Dendritic cell treated with granulocyte-macrophage colony-stimulating factor and Interleukin-4, amounts not matched to agents 40 ng/mL and 50 ng/mL, for 4 days (primary cell): ENCODE measurements at regions of chr12 and their contacts with region 1.

Region 1: GRCh38 chr12:121296618-121297434 is at the start of gene CAMKK2:
- H3K4me3 Mint-ChIP-seq: peak within 1 kb of the TSS; percentile 89
- H3K27ac Mint-ChIP-seq: peak within 1 kb of the TSS; percentile 83
- H3K4me1 Mint-ChIP-seq: peaks cover 48% of the 10 kb centered on the region
- H3K27me3 Mint-ChIP-seq: no peaks in the 10 kb centered on the region

Region 2: DNA sequence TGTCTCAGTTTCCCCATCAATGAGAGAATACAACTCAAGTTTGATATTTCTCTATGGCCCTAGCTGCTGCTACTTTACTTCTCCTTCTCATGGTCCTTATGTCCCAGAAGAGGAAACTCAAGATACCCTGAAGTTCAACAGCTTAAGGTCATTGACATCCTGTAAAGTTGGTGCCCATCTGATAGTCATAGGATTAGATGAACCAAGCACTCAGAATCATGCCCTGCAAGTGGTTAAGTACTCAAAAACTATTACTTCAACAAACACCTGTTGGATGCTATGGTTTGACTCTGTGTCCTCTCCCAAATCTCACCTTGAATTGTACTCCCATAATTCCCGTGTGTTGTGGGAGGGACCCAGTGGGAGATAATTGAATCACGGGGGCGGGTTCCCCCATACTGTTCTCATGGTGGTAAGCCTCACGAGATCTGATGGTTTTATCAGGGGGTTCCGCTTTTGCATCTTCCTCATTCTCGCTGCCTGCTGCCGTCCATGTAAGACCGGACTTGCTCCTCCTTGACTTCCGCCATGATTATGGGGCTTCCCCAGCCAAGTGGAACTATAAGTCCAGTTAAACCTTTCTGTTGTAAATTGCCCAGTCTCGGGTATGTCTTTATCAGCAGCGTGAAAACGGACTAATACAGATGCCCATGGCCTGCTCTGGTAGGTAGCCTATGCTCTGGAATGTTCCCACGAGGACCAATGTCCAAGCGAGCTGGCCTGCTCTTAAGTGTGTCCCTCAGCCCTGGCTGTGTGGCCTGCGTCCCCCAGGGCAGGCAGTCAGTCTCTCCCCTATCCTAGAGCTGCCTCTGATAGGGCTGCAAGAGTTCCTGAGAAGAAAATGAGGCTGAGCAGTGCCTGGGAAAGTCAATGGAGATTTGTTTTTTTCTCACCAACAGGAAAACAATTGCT is 18.4 kb before region 1 on chr12:
- intact Hi-C with region 1: loop called (anchors 1 kb)
- H3K4me3 Mint-ChIP-seq: peak overlapping the region; percentile 9
- H3K27ac Mint-ChIP-seq: peak overlapping the region; percentile 84
- H3K4me1 Mint-ChIP-seq: peaks cover 55% of the 10 kb centered on the region
- H3K27me3 Mint-ChIP-seq: no peaks in the 10 kb centered on the region